AG04449 (cell line): ENCODE measurements at regions of chr17 and their contacts with region 1.

Region 1: DNA sequence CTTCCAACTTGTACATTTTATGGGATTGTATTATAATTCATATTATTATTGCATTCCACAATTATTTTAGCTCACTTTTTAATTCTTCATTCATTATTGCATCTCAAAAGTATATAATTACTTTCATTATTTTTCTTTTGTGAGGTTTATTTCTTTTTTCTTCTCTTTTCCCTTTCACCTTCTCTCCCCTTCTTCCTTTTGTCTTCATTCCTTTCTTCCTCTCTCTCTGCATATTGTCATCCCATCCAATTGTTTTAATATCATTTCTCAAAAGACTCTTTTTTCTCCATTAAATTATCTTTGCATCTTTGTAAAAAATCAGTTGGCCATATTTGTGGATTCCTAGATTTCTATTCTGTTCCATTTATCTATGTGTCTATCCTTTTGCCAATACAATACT is 17.3 kb downstream of the DYNLL2 start:
- DNase-seq: no peak
- H3K4me3 ChIP-seq: no peak overlapping the region
- CTCF ChIP-seq: no peak

Region 2: GRCh38 chr17:58112970-58113631 is 12.6 kb after region 1 on chr17:
- CTCF ChIA-PET with region 1: interaction called, 14 read pairs
- POLR2A ChIA-PET with region 1: no interaction called
- DNase-seq: no peak
- H3K4me3 ChIP-seq: no peak overlapping the region
- CTCF ChIP-seq: peak; percentile 89